MCF 10A (cell line): ENCODE measurements at regions of chr16 and their contacts with region 1.

Region 1: DNA sequence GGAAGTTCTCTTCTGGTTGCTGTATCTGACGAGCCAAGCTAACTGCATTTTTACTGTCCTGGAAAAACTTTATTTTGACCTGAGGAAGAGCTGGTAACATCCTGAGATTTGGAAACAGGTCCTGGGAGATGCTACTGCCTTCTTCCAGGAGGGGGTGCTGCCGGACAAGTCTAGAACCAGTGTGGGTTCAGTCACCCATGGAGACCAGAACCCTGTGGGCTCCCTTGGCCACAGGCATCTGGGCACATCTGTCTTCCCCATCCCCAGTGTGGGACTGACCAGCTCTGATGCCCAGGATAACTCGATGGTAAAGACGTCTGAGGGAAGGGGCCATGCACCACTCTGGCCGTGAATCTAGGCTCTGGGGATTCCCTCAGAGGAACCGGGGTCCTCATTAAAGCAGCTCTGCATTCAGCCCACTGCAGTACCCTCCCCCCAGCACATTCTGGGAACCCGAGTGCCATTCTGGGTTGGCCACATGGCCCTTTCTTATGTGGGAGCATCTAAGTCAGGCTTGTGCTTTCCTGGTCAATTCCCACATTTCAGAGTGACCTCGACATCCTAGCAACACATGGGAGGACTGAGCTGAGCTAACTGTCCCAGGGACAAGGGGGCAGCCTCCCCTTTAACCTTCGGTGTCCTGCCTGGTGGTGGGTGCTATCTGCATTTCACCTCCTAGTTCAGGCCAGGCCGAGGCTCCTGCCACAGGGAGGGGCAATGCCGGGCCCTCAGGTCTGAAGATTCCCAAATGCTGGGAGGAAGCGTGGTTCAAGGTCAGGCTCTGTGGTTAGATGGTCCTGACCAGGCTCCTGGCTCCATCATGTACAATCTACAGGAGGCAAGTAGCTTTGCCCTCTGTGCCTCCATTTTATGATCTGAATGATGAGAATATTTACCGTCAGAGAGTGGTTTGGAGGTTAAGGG is 6.4 kb downstream of the C16orf86 start:
- DNase-seq: peak; percentile 83
- H3K4me3 Mint-ChIP-seq: no peak overlapping the region
- H3K27ac Mint-ChIP-seq: peak overlapping the region; percentile 73
- H3K4me1 Mint-ChIP-seq: peaks cover 15% of the 10 kb centered on the region
- H3K27me3 Mint-ChIP-seq: no peaks in the 10 kb centered on the region
- CTCF ChIP-seq: peak; percentile 68

Region 2: DNA sequence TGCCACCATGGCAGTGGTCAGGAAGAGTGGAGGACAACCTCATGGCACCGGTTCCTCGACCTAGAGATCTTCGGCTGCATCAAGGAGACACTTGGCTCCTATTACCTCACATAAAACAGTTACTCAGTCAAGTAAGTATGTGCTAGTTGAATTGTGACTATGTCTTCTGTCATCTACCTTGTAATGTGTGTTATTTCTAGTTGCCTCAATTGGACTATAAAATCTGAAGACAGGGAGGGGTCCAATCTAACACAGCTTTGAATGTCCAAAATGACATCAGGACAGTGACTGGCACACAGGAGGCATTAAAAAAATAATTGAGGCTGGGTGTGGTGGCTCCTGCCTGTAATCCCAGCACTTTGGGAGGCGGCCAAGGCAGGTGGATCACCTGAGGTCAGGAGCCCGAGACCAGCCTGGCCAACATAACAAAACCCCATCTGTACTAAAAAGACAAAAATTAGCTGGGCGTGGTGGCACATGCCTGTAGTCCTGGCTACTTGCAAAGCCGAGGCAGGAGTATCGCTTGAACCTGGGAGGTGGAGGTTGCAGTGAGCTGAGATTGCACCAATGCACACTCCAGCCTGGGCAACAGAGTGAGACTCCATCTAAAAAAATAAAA is 10.9 kb after region 1 on chr16:
- CTCF ChIA-PET with region 1: interaction called, 11 read pairs
- POLR2A ChIA-PET with region 1: no interaction called
- intact Hi-C with region 1: no loop called
- DNase-seq: no peak
- H3K4me3 Mint-ChIP-seq: no peak overlapping the region
- H3K27ac Mint-ChIP-seq: no peak overlapping the region
- H3K4me1 Mint-ChIP-seq: no peaks in the 10 kb centered on the region
- H3K27me3 Mint-ChIP-seq: no peaks in the 10 kb centered on the region
- CTCF ChIP-seq: no peak

Region 3: DNA sequence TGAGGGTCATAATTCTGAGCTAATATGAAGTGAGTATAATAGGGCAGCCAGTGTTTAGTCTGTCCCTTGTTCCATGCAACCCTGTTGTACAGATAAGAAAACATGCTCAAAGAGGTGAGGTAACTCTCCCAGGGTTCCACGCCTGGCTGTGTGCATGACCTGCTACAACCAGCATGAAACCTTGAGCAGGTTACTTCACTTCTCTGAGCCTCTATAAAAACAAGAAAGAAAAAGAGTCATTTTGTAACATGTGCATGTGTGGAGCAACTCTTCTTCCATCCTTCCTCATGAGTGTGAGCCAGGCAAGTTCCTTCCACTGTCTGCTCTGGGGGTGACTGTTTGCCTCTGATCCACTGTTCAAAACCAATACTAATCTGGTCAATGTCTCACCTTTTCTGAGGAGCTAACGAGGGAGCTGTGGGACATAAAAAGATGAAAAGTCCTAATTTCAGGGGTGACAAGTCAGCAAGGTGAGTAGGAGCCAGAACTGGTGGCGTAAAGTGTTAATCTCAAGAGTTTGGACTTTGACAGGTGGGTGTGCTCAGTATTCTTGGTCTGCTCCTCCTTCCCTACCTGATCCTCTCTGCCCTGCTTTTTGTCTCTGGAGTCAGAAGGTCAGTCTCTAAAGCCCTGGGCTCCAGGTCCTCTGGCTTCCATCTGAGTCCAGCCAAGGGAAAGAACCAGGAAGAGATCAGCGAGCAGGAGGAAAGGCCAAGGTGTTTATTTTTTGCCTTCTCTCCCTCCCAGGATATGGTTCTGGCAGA is 24.6 kb after region 1 on chr16:
- CTCF ChIA-PET with region 1: interaction called, 12 read pairs
- POLR2A ChIA-PET with region 1: interaction called, 3 read pairs
- intact Hi-C with region 1: no loop called
- DNase-seq: no peak
- H3K4me3 Mint-ChIP-seq: no peak overlapping the region
- H3K27ac Mint-ChIP-seq: no peak overlapping the region
- H3K4me1 Mint-ChIP-seq: no peaks in the 10 kb centered on the region
- H3K27me3 Mint-ChIP-seq: no peaks in the 10 kb centered on the region
- CTCF ChIP-seq: no peak

Region 4: GRCh38 chr16:67806428-67807147 is 133.6 kb after region 1 on chr16 and contains the starts of genes RANBP10 and TSNAXIP1:
- CTCF ChIA-PET with region 1: interaction called, 6 read pairs
- POLR2A ChIA-PET with region 1: no interaction called
- intact Hi-C with region 1: loop called (anchors 1 kb)
- DNase-seq: peak; percentile 99
- H3K4me3 Mint-ChIP-seq: peak within 1 kb of the TSS; percentile 90
- H3K27ac Mint-ChIP-seq: peak within 1 kb of the TSS; percentile 89
- H3K4me1 Mint-ChIP-seq: peaks cover 5% of the 10 kb centered on the region
- H3K27me3 Mint-ChIP-seq: no peaks in the 10 kb centered on the region
- CTCF ChIP-seq: no peak
- total RNA-seq, gene RANBP10: 17.2 and 21.7 TPM in 2 replicates
- total RNA-seq, gene TSNAXIP1: 1.1 and 1.5 TPM in 2 replicates

Region 5: DNA sequence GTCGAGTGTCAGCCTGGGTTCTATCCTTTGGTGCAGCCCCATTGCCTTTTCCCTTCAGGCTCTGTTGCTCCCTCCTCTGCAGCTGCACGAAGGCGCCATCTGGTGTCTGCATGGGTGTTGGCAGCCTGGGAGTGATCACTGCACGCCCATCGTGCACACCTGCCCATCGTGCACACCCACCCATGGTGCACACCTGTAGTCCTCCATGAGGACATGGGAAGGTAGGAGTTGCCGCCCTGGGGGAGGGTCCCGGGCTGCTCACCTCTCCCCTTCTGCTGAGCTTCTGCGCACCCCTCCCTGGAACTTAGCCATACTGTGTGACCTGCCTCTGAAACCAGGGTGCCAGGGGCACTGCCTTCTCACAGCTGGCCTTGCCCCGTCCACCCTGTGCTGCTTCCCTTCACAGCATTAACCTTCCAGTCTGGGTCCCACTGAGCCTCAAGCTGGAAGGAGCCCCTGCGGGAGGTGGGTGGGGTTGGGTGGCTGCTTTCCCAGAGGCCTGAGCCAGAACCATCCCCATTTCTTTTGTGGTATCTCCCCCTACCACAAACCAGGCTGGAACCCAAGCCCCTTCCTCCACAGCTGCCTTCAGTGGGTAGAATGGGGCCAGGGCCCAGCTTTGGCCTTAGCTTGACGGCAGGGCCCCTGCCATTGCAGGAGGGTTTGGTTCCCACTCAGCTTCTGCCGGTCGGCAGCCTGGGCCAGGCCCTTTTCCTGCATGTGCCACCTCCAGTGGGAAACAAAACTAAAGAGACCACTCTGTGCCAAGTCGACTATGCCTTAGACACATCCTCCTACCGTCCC is 255.8 kb after region 1 on chr16:
- CTCF ChIA-PET with region 1: interaction called, 7 read pairs
- POLR2A ChIA-PET with region 1: no interaction called
- intact Hi-C with region 1: loop called (anchors 1 kb)
- DNase-seq: peak; percentile 75
- H3K4me3 Mint-ChIP-seq: no peak overlapping the region
- H3K27ac Mint-ChIP-seq: no peak overlapping the region
- H3K4me1 Mint-ChIP-seq: peaks cover under 1% of the 10 kb centered on the region
- H3K27me3 Mint-ChIP-seq: no peaks in the 10 kb centered on the region
- CTCF ChIP-seq: peak; percentile 86